ENCODE measurements at regions of chr1 and their contacts with region 1.

Region 1: GRCh38 chr1:110780600-110781484 is 92.1 kb upstream of the CD53 start:
- DNase-seq: peak; percentile 55 to 92 (median 70)
- ATAC-seq: peak; percentile 75
- H3K4me3 ChIP-seq: no peak overlapping the region
- H3K4me3 Mint-ChIP-seq: no peak overlapping the region
- H3K27ac ChIP-seq: no peak overlapping the region
- H3K27ac Mint-ChIP-seq: no peak overlapping the region
- H3K4me1 ChIP-seq: peaks cover 41% of the 10 kb centered on the region
- H3K4me1 Mint-ChIP-seq: peaks cover 56% of the 10 kb centered on the region
- H3K27me3 ChIP-seq: no peaks in the 10 kb centered on the region
- H3K27me3 Mint-ChIP-seq: no peaks in the 10 kb centered on the region
- CTCF ChIP-seq: peak; percentile 70

Region 2: DNA sequence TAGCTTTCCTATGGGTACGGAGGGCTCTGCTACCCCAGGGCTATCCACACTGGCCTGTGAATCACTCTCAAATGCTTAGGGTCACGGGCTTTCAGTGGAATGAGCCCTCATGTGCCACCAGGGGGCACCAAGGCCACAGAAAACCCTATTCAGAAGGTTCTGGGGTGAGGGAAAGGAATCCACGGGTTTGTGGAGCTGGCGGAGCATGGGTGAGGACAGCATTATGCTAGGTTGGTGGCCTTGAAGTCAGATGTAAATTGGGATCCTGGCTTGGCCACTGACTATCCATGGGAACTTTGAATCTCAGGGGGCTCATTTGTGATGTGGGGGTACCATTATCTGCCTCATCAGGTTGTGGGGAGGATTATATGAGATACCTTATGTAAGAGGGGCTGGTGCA is 368.3 kb before region 1 on chr1:
- CTCF ChIA-PET with region 1: no interaction called
- POLR2A ChIA-PET with region 1: no interaction called
- intact Hi-C with region 1: loop called in 1 of 2 experiments (anchors 10 kb)
- DNase-seq: peak; percentile 24 to 81 (median 52)
- ATAC-seq: peak; percentile 57
- H3K4me3 ChIP-seq: no peak overlapping the region
- H3K4me3 Mint-ChIP-seq: no peak overlapping the region
- H3K27ac ChIP-seq: no peak overlapping the region
- H3K27ac Mint-ChIP-seq: no peak overlapping the region
- H3K4me1 ChIP-seq: peaks cover 15% of the 10 kb centered on the region
- H3K4me1 Mint-ChIP-seq: peaks cover 18% of the 10 kb centered on the region
- H3K27me3 ChIP-seq: no peaks in the 10 kb centered on the region
- H3K27me3 Mint-ChIP-seq: no peaks in the 10 kb centered on the region
- CTCF ChIP-seq: peak; percentile 77

Region 3: DNA sequence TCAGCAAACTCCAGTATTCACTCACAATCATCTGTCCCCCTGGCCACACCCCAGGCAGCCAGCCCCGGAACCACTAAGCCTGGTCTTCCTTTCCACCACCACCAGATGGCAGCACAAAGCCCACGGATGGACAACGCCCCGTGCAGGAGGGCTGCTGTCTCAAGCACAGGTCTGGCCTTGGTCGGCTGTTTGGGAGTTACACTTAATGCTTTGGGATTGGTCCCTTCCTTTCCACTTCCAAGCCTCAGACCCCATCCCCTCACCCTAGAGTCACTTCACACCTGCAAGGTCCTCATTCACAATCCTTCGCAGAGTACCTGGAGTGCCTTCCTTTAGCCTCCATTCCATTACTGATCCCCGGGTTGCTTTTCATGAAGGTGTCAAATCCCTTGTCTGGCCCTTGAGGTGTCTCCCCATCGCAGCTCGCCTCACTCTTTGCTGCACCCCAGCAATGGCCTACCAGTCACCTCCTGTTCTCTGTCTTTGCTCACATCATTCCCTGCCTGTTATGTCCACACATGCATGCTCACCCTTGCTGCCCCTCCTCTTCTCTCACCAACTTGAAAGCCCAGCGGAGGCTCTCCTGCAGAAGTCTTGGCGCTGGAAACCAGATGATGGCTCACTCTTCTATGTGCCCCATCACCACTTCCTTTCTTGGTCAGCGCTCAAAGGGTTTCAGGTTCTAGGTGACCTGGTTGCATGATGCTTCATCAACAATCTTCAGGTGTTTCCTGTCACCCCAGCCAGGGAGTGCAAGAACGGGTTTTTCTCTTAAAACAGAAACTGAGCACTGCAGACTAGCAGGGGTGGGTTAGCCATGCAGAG is 149.8 kb before region 1 on chr1:
- CTCF ChIA-PET with region 1: interaction called, 7 read pairs
- POLR2A ChIA-PET with region 1: interaction called, 14 read pairs
- intact Hi-C with region 1: loop called in 1 of 2 experiments (anchors 1 kb)
- DNase-seq: peak; percentile 77 to 93 (median 83)
- ATAC-seq: peak; percentile 72
- H3K4me3 ChIP-seq: peak overlapping the region; percentile 43
- H3K4me3 Mint-ChIP-seq: no peak overlapping the region
- H3K27ac ChIP-seq: peak overlapping the region; percentile 66 to 75
- H3K27ac Mint-ChIP-seq: no peak overlapping the region
- H3K4me1 ChIP-seq: peaks cover 87% of the 10 kb centered on the region
- H3K4me1 Mint-ChIP-seq: peaks cover 47% of the 10 kb centered on the region
- H3K27me3 ChIP-seq: no peaks in the 10 kb centered on the region
- H3K27me3 Mint-ChIP-seq: no peaks in the 10 kb centered on the region
- CTCF ChIP-seq: peak; percentile 87

Region 4: DNA sequence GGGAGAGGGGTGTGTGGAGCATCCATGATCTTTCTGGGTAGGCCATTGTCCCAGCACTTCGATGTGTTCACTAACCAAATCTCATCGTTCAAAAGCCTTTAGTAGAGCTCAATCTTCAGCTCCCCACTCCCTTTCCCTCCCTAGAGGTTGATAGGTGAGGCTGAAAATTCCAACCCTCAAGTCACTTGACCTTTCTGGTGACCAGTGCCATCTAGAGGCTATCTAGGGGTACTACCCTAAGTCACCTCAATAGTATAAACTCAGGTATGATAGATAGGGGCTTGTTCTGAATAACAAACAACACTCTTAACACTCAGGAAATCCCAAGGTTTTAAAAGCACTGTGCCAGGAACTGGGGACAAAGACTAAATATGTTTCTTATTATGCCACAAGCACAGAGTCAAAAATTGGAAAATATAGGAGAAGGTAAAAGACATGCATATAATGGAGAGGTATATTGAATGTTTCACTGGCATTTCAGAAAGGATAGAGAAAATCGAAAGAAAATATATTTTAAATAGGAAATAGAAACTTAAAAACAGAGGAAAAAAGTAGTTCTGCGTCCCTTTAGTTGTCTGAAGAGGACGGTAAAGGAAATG is 49.2 kb after region 1 on chr1:
- CTCF ChIA-PET with region 1: interaction called, 4 read pairs
- POLR2A ChIA-PET with region 1: interaction called, 5 read pairs
- intact Hi-C with region 1: loop called in 1 of 2 experiments (anchors 1 kb)
- DNase-seq: peak in 6 of 14 experiments; percentile 11 to 76 (median 52)
- ATAC-seq: peak; percentile 96
- H3K4me3 ChIP-seq: no peak overlapping the region
- H3K4me3 Mint-ChIP-seq: no peak overlapping the region
- H3K27ac ChIP-seq: no peak overlapping the region
- H3K27ac Mint-ChIP-seq: no peak overlapping the region
- H3K4me1 ChIP-seq: peaks cover 5% of the 10 kb centered on the region
- H3K4me1 Mint-ChIP-seq: peaks cover 21% of the 10 kb centered on the region
- H3K27me3 ChIP-seq: no peaks in the 10 kb centered on the region
- H3K27me3 Mint-ChIP-seq: no peaks in the 10 kb centered on the region
- CTCF ChIP-seq: peak; percentile 95

Region 5: GRCh38 chr1:110990536-110990935 is 209.7 kb after region 1 on chr1:
- CTCF ChIA-PET with region 1: interaction called, 4 read pairs
- POLR2A ChIA-PET with region 1: no interaction called
- intact Hi-C with region 1: loop called in 1 of 2 experiments (anchors 2 kb)
- DNase-seq: no peak
- ATAC-seq: no peak
- H3K4me3 ChIP-seq: no peak overlapping the region
- H3K4me3 Mint-ChIP-seq: no peak overlapping the region
- H3K27ac ChIP-seq: no peak overlapping the region
- H3K27ac Mint-ChIP-seq: no peak overlapping the region
- H3K4me1 ChIP-seq: no peaks in the 10 kb centered on the region
- H3K4me1 Mint-ChIP-seq: peaks cover 5% of the 10 kb centered on the region
- H3K27me3 ChIP-seq: no peaks in the 10 kb centered on the region
- H3K27me3 Mint-ChIP-seq: peaks cover 4% of the 10 kb centered on the region
- CTCF ChIP-seq: no peak

Region 6: GRCh38 chr1:111082421-111083192 is 301.8 kb after region 1 on chr1:
- CTCF ChIA-PET with region 1: no interaction called
- POLR2A ChIA-PET with region 1: no interaction called
- intact Hi-C with region 1: no loop called
- DNase-seq: no peak
- ATAC-seq: no peak
- H3K4me3 ChIP-seq: no peak overlapping the region
- H3K4me3 Mint-ChIP-seq: no peak overlapping the region
- H3K27ac ChIP-seq: no peak overlapping the region
- H3K27ac Mint-ChIP-seq: no peak overlapping the region
- H3K4me1 ChIP-seq: no peaks in the 10 kb centered on the region
- H3K4me1 Mint-ChIP-seq: no peaks in the 10 kb centered on the region
- H3K27me3 ChIP-seq: peaks cover 0 to 8% of the 10 kb centered on the region in 2 experiments
- H3K27me3 Mint-ChIP-seq: peaks cover 34% of the 10 kb centered on the region
- CTCF ChIP-seq: no peak

Region 7: GRCh38 chr1:111334169-111334568 is 553.3 kb after region 1 on chr1:
- CTCF ChIA-PET with region 1: interaction called, 3 read pairs
- POLR2A ChIA-PET with region 1: no interaction called
- intact Hi-C with region 1: loop called (anchors 2 to 10 kb)
- DNase-seq: peak; percentile 37 to 85 (median 52)
- ATAC-seq: peak; percentile 95
- H3K4me3 ChIP-seq: no peak overlapping the region
- H3K4me3 Mint-ChIP-seq: no peak overlapping the region
- H3K27ac ChIP-seq: no peak overlapping the region
- H3K27ac Mint-ChIP-seq: no peak overlapping the region
- H3K4me1 ChIP-seq: peaks cover 8% of the 10 kb centered on the region
- H3K4me1 Mint-ChIP-seq: peaks cover 6% of the 10 kb centered on the region
- H3K27me3 ChIP-seq: no peaks in the 10 kb centered on the region
- H3K27me3 Mint-ChIP-seq: no peaks in the 10 kb centered on the region
- CTCF ChIP-seq: peak; percentile 81